ENCODE measurements at regions of chr9 and their contacts with region 1.

Region 1: GRCh38 chr9:131781069-131781468 is 41.2 kb upstream of the RAPGEF1 start:
- DNase-seq: no peak
- ATAC-seq: no peak
- H3K4me3 ChIP-seq: no peak overlapping the region
- H3K27ac ChIP-seq: no peak overlapping the region
- H3K4me1 ChIP-seq: peaks cover 0 to 3% of the 10 kb centered on the region in 2 experiments; a peak in 1 of 4 replicates
- H3K27me3 ChIP-seq: peaks cover 55% of the 10 kb centered on the region
- CTCF ChIP-seq: no peak
- POLR2A ChIP-seq: no peak
- RAD21 ChIP-seq: no peak

Region 2: GRCh38 chr9:132114102-132114707 is 333.1 kb after region 1 on chr9:
- CTCF ChIA-PET with region 1: no interaction called
- POLR2A ChIA-PET with region 1: no interaction called
- RAD21 ChIA-PET with region 1: no interaction called
- intact Hi-C with region 1: loop called (anchors 10 kb)
- DNase-seq: no peak
- ATAC-seq: peak; percentile 54; the same call in 1 of the 2 replicates
- H3K4me3 ChIP-seq: no peak overlapping the region
- H3K27ac ChIP-seq: no peak overlapping the region
- H3K4me1 ChIP-seq: no peaks in the 10 kb centered on the region
- H3K27me3 ChIP-seq: peaks cover 65% of the 10 kb centered on the region
- CTCF ChIP-seq: no peak
- POLR2A ChIP-seq: no peak
- RAD21 ChIP-seq: no peak

Region 3: DNA sequence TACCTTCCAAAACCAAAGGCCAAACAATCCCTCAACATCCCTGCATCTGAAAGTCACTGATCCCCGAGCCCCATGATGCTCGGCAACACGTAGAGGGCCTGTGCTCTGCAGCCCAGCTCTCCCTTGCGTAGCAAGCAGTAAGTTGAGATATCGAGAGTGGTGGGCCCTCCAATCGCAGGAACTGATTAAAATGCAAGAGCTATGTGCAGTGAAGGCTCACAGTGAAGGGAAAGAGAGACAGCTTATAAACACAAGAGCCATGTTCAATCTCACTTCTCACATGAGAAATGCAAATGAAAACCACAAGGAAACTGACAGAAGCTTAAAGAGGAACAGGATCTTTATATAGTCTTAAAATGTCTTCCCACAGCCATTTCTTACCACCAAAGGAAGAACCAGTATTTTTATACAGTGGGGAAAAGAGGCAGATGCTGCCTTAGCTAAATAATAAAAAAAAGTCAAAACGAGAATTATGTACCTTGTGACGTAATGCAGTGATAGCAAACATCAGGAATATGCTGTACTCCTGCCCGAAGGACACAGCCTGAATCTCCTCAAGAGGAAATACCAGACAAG is 601.0 kb after region 1 on chr9:
- CTCF ChIA-PET with region 1: no interaction called
- POLR2A ChIA-PET with region 1: no interaction called
- RAD21 ChIA-PET with region 1: no interaction called
- intact Hi-C with region 1: loop called (anchors 10 kb)
- DNase-seq: no peak
- ATAC-seq: no peak
- H3K4me3 ChIP-seq: no peak overlapping the region
- H3K27ac ChIP-seq: no peak overlapping the region
- H3K4me1 ChIP-seq: no peaks in the 10 kb centered on the region
- H3K27me3 ChIP-seq: no peaks in the 10 kb centered on the region
- CTCF ChIP-seq: no peak
- POLR2A ChIP-seq: no peak
- RAD21 ChIP-seq: no peak

Measured in HCT116 (cell line).